ENCODE measurements at regions of chr18 and their contacts with region 1.

Region 1: DNA sequence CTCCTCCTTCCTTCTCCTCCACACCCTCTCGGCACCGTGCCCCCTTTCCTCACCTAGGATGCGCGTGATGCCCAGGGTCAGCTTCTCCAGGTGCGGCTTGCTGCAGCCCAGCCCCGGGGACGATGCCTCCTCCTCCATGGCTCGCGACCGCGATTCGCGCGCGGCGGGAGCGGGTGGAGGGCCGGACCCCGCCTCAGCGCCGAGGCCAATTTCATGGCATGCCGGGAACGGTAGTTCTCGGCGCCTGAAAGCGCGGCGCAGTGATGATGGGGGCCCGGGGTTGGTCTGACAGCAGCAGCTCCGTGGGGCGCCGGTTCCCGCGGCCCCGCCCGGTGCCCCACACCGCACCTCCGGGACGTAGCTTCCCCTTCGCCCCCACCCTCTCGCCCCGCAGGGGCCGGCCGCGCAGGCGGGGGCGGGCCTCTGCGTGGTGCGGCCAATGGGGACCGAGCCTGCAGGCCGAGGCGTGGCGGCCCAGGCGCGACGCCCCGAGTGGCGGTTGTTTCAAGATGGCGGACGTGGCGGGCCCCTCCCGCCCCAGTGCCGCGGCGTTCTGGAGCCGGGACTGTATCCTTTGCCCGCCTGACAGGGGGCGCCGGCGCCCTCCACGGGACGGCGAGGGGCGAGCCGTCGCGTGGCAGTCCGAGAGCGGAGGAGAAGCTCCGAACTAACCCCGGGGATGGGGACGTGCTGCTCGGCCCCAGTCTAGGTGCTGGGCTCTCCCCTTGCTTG is at the starts of genes KIAA1328 and TPGS2:
- DNase-seq: peak; percentile 96
- H3K4me3 ChIP-seq: peak within 1 kb of the TSS; percentile 95 to 97
- H3K27ac ChIP-seq: peak within 1 kb of the TSS; percentile 75 to 93
- H3K4me1 ChIP-seq: peaks cover 7 to 9% of the 10 kb centered on the region in 2 experiments; a peak in 3 of 4 replicates
- H3K27me3 ChIP-seq: no peaks in the 10 kb centered on the region
- CTCF ChIP-seq: peak; percentile 63
- EP300 ChIP-seq: peak in 1 of 2 experiments; percentile 11; a peak in 1 of 4 replicates
- RAD21 ChIP-seq: no peak
- polyA plus RNA-seq, gene KIAA1328: 2.6 and 3.3 TPM in 2 replicates
- polyA plus RNA-seq, gene TPGS2: 235 and 257 TPM in 2 replicates

Region 2: DNA sequence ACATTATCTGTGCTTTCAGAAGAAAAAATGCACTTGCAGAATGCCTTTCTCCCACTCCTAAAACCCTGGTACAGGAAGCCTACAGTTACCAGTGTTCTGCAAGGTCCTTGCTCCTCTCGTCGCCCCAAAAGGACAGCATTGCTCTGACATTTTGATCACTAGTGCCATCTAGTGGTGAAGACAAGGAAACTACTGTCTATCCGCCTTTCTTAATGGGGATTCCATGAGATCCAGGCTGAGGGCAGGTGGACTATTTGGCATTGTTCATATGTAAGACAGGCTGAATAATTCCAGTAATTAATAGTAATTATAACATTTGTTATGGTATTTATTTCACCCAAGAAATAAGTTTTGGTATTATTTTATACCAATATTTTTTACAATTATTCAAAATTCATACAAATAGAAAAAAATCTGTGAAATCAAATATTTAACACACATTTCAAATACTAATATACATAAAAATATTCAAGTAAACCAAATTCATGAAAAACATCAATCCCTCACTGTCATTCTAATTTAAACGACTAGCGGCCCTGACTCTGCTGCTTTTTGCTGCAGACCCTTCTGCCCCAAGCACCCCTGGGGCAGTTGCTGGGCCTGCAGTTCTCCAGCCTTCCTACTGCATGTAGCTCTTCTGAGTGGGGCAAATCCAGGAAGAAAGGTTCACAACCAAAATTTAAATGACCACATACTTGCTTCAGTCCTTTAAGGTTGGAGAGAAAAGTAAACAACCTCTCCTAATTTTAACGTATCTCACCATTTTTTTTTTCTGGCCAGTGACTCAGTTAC is 19.0 kb before region 1 on chr18:
- CTCF ChIA-PET with region 1: interaction called, 11 read pairs
- POLR2A ChIA-PET with region 1: no interaction called
- DNase-seq: peak; percentile 76
- H3K4me3 ChIP-seq: peak overlapping the region in 1 of 2 experiments; percentile 16; a peak in 1 of 4 replicates
- H3K27ac ChIP-seq: peak overlapping the region in 1 of 2 experiments; percentile 44; a peak in 2 of 4 replicates
- H3K4me1 ChIP-seq: peaks cover 0 to 4% of the 10 kb centered on the region in 2 experiments; a peak in 3 of 4 replicates
- H3K27me3 ChIP-seq: no peaks in the 10 kb centered on the region
- CTCF ChIP-seq: peak; percentile 82
- EP300 ChIP-seq: no peak
- RAD21 ChIP-seq: peak; percentile 76

Measured in SK-N-SH (cell line).